ENCODE measurements at regions of chr1 and their contacts with region 1.

Region 1: GRCh38 chr1:156065212-156065611 is 4.3 kb downstream of the RAB25 start:
- DNase-seq: no peak
- ATAC-seq: no peak
- H3K4me3 Mint-ChIP-seq: no peak overlapping the region
- H3K27ac Mint-ChIP-seq: peak overlapping the region; percentile 2
- H3K4me1 Mint-ChIP-seq: peaks cover 18% of the 10 kb centered on the region
- H3K27me3 Mint-ChIP-seq: no peaks in the 10 kb centered on the region

Region 2: DNA sequence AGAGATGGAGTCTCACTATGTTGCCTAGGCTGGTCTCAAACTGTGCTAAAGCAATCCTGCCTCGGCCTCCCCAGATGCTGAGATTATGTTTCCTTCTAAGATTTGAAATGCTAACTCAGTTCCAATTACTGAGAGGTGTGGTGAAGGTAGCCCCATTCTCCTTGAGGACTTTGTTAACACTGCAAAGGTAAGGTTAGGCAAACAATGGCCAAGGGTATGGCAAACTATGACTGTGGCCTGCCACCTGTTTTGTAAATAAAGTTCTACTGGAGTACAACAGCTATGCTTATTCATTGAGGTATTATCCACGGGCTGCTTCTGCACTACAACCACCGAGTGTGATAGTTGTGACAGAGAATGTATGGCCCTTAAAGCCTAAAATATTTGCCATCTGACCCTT is 144.5 kb before region 1 on chr1:
- CTCF ChIA-PET with region 1: no interaction called
- DNase-seq: no peak
- ATAC-seq: no peak
- H3K4me3 Mint-ChIP-seq: no peak overlapping the region
- H3K27ac Mint-ChIP-seq: no peak overlapping the region
- H3K4me1 Mint-ChIP-seq: peaks cover 9% of the 10 kb centered on the region
- H3K27me3 Mint-ChIP-seq: no peaks in the 10 kb centered on the region

Region 3: GRCh38 chr1:156020292-156021089 is 44.7 kb before region 1 on chr1 and contains the start of gene SSR2:
- CTCF ChIA-PET with region 1: interaction called, 22 read pairs
- DNase-seq: peak; percentile 94
- ATAC-seq: peak; percentile 99
- H3K4me3 Mint-ChIP-seq: peak within 1 kb of the TSS; percentile 92
- H3K27ac Mint-ChIP-seq: peak within 1 kb of the TSS; percentile 94
- H3K4me1 Mint-ChIP-seq: peaks cover 37% of the 10 kb centered on the region
- H3K27me3 Mint-ChIP-seq: peaks cover 4% of the 10 kb centered on the region
- total RNA-seq, gene SSR2: 185 to 200 TPM

Region 4: GRCh38 chr1:156025877-156026276 is 39.3 kb before region 1 on chr1:
- CTCF ChIA-PET with region 1: interaction called, 22 read pairs
- DNase-seq: peak; percentile 69
- ATAC-seq: peak; percentile 85
- H3K4me3 Mint-ChIP-seq: no peak overlapping the region
- H3K27ac Mint-ChIP-seq: no peak overlapping the region
- H3K4me1 Mint-ChIP-seq: peaks cover 16% of the 10 kb centered on the region
- H3K27me3 Mint-ChIP-seq: peaks cover 4% of the 10 kb centered on the region

Region 5: GRCh38 chr1:156050416-156050815 is 14.8 kb before region 1 on chr1:
- CTCF ChIA-PET with region 1: interaction called, 13 read pairs
- DNase-seq: no peak
- ATAC-seq: no peak
- H3K4me3 Mint-ChIP-seq: no peak overlapping the region
- H3K27ac Mint-ChIP-seq: no peak overlapping the region
- H3K4me1 Mint-ChIP-seq: peaks cover 17% of the 10 kb centered on the region
- H3K27me3 Mint-ChIP-seq: no peaks in the 10 kb centered on the region

Measured in activated CD8-positive, alpha-beta memory T cell treated with anti-CD3 and anti-CD28 coated beads, Interleukin-2, amount 10 ng/mL, durations not matched to agents 7 days and 5 days (primary cell).